ENCODE measurements at regions of chr1 and their contacts with region 1.

Region 1: DNA sequence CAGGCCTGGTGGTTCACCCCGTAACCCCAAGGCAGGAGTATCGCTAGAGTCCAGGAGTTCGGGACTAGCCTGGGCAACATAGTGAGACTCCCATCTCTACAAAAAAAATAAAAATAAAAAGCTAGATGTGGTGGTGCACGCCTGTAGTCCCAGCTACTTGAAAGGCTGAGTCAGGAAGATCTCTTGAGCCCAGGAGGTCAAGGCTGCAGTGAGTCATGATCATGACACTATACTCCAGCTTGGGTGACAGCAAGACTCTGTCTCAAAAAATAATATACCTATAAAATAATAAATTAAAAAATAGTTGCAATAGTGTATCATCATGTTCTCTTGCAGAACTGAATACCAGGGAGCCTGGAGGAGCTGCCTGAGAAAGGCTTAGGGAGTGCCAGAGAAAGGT is 19.9 kb upstream of the TMEM39B start:
- DNase-seq: no peak
- H3K4me3 ChIP-seq: no peak overlapping the region
- H3K4me3 Mint-ChIP-seq: no peak overlapping the region
- H3K27ac ChIP-seq: no peak overlapping the region
- H3K27ac Mint-ChIP-seq: no peak overlapping the region
- H3K4me1 ChIP-seq: no peaks in the 10 kb centered on the region
- H3K4me1 Mint-ChIP-seq: peaks cover 0 to 3% (median 0%) of the 10 kb centered on the region in 3 donors
- H3K27me3 ChIP-seq: no peaks in the 10 kb centered on the region
- H3K27me3 Mint-ChIP-seq: no peaks in the 10 kb centered on the region

Region 2: DNA sequence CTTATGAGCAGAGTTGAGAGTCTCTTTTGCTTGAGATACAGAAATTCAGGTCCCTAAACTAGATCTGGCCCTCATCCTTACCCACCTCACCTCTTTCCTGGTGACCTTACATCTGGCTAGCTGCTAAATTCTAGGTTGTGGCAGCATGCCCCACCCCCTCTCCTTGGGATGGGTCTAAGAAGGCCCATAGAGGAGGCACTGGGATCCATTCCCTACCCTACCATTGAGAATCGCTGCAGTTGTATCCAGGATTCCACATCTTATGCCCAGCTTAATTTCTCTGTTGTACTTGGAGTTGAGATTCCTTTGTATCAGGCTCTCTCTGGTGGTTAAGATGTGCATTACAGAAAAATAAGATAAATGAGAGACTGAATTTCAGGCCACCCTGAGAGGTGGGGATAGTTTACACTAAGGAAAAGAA is 10.4 kb after region 1 on chr1:
- CTCF ChIA-PET with region 1: interaction called, 11 read pairs
- POLR2A ChIA-PET with region 1: no interaction called
- DNase-seq: peak in 1 of 5 donors; percentile 25
- H3K4me3 ChIP-seq: no peak overlapping the region
- H3K4me3 Mint-ChIP-seq: no peak overlapping the region
- H3K27ac ChIP-seq: no peak overlapping the region
- H3K27ac Mint-ChIP-seq: peak overlapping the region in 6 of 8 donors; percentile 7 to 81 (median 26)
- H3K4me1 ChIP-seq: peaks cover 17% of the 10 kb centered on the region
- H3K4me1 Mint-ChIP-seq: peaks cover 8% of the 10 kb centered on the region in 3 donors
- H3K27me3 ChIP-seq: no peaks in the 10 kb centered on the region
- H3K27me3 Mint-ChIP-seq: no peaks in the 10 kb centered on the region

Measured in CD8-positive, alpha-beta memory T cell (primary cell).